ENCODE measurements at regions of chr2 and their contacts with region 1.

Region 1: DNA sequence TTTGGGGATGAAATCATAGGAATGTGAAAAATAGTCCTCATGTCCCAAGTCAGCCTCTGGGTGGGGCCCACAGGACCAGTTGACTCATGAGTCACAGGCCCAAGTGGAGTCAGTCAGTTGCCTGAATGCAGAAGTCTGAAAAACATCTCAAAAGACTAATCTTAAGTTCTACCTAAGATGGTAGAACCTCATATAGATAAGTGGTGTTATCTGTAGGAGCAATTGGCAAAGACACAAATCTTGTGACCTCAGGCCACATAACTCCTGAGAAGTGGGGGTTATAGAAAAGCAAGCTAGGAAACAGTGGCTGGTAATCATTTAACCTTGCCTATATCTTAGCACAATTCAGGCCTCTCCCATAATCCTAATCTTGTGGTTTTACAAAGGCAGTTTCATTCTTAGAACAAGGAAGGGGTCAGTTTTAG is 257.1 kb upstream of the SPOPL start:
- DNase-seq: no peak
- H3K4me3 ChIP-seq: no peak overlapping the region
- H3K27ac ChIP-seq: peak overlapping the region; percentile 54 to 73
- H3K4me1 ChIP-seq: peaks cover 0 to 24% of the 10 kb centered on the region in 2 donors
- H3K27me3 ChIP-seq: no peaks in the 10 kb centered on the region
- CTCF ChIP-seq: no peak

Region 2: DNA sequence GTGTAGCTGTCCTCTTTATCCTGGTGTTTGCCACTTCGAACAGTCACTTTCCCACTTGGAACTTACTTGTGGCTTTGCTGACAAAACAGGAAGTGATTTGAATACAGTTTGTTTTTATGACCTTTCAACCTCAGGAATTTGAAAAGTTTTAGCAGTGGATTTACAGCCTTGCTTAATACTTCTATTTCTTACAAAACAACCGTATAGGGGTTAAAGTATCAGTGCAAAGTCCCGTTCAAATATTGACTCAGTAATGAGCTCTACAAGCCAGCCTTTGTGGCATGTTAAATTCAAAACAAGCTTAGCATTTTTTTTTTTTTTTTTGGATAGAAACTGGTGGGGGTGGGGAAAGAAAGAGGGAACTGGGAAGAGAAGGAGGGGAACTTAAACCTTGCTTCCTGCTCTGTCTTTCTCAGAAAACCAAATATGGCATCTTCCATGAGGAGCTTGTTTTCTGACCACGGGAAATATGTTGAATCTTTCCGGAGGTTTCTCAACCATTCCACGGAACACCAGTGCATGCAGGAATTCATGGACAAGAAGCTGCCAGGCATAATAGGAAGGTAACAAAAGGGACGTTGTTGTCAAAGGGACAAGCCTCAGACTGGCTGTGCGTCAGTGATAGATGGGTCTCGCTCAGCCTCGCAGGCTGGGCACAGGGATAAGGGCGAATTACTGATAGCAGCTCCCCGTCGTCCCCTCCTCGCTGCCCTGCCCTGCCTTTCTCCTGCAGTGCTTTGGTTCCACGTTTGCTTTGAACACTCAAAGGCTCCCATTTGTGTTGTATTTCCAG is 280.3 kb before region 1 on chr2 and contains the start of gene HNMT:
- intact Hi-C with region 1: loop called (anchors 10 kb)
- DNase-seq: peak in 1 of 2 donors; percentile 71
- H3K4me3 ChIP-seq: peak within 1 kb of the TSS; percentile 45 to 75
- H3K27ac ChIP-seq: peak within 1 kb of the TSS; percentile 90 to 93
- H3K4me1 ChIP-seq: peaks cover 0 to 18% of the 10 kb centered on the region in 2 donors
- H3K27me3 ChIP-seq: no peaks in the 10 kb centered on the region
- CTCF ChIP-seq: no peak
- total RNA-seq, gene HNMT: 22.2 TPM

Region 3: DNA sequence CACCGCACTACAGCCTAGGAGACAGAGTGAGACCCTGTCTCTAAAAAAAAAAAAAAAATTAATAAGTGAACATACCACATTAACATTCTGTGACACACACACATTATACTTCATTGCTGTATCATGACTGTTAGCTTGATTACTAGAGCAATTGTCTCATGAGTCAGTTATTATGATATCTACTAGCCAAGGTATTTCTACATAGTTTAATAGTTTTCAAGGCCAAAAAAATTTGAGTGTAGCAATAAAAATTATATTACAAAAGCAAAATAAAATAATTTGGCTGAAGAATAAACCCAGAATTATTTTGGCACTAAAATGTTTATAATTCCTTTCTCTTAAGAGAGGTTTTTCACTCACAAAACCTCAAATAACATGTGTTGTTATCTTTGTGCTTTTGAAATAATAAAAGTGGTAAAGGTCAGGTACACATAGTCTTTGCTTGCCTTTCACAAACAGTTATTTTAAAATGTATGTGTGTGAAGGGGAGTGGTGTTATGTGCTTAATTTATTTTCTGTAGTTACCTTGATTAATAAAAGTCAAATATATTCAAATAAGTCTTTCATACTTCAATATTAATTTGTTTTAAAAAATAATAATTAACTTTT is 120.1 kb after region 1 on chr2:
- intact Hi-C with region 1: loop called (anchors 5 kb)
- DNase-seq: no peak
- H3K4me3 ChIP-seq: no peak overlapping the region
- H3K27ac ChIP-seq: no peak overlapping the region
- H3K4me1 ChIP-seq: peaks cover 0 to 13% of the 10 kb centered on the region in 2 donors
- H3K27me3 ChIP-seq: no peaks in the 10 kb centered on the region
- CTCF ChIP-seq: no peak

Region 4: GRCh38 chr2:138501425-138502283 is 257.1 kb after region 1 on chr2 and contains the start of gene SPOPL:
- intact Hi-C with region 1: loop called (anchors 10 kb)
- DNase-seq: peak; percentile 72 to 96
- H3K4me3 ChIP-seq: peak within 1 kb of the TSS; percentile 68 to 90
- H3K27ac ChIP-seq: peak within 1 kb of the TSS; percentile 94 to 96
- H3K4me1 ChIP-seq: peaks cover 0 to 16% of the 10 kb centered on the region in 2 donors
- H3K27me3 ChIP-seq: no peaks in the 10 kb centered on the region
- CTCF ChIP-seq: peak in 2 of 3 experiments; percentile 18 to 26
- total RNA-seq, gene SPOPL: 9.0 TPM

Measured in ascending aorta (tissue), 2 donors.